Caco-2 (cell line): ENCODE measurements at regions of chr13 and their contacts with region 1.

Region 1: DNA sequence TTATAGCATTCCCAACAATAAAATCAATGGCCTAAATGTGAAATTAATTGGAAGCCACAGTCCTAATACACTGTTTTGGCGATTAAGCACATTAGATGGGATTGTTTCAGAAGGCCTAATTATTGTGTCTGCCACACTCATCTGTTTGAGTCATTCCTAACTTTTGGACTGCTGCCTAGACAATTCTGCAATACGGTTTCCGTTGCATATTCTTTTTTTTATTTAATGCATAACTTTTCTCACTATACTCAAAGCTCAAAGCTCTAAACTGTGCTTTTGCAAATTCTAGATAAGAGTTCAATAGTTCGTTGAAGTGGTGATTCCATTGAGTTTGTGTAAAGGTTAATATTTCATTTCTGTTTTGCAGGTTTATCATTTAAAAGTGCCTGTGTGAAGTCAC is 53.1 kb downstream of the MBNL2 start:
- DNase-seq: no peak
- H3K4me3 ChIP-seq: no peak overlapping the region
- H3K4me3 Mint-ChIP-seq: no peak overlapping the region
- H3K27ac Mint-ChIP-seq: peak overlapping the region; percentile 29
- H3K4me1 ChIP-seq: peaks cover 71% of the 10 kb centered on the region
- H3K4me1 Mint-ChIP-seq: peaks cover 25% of the 10 kb centered on the region
- H3K27me3 ChIP-seq: no peaks in the 10 kb centered on the region
- H3K27me3 Mint-ChIP-seq: no peaks in the 10 kb centered on the region
- CTCF ChIP-seq: no peak

Region 2: GRCh38 chr13:97221989-97222700 is 53.1 kb before region 1 on chr13 and contains the start of gene MBNL2:
- CTCF ChIA-PET with region 1: no interaction called
- POLR2A ChIA-PET with region 1: no interaction called
- intact Hi-C with region 1: loop called (anchors 2 kb)
- DNase-seq: peak; percentile 91 to 92
- H3K4me3 ChIP-seq: peak within 1 kb of the TSS; percentile 51
- H3K4me3 Mint-ChIP-seq: peak within 1 kb of the TSS; percentile 95
- H3K27ac Mint-ChIP-seq: peak within 1 kb of the TSS; percentile 89
- H3K4me1 ChIP-seq: peaks cover 43% of the 10 kb centered on the region
- H3K4me1 Mint-ChIP-seq: peaks cover 40% of the 10 kb centered on the region
- H3K27me3 ChIP-seq: no peaks in the 10 kb centered on the region
- H3K27me3 Mint-ChIP-seq: no peaks in the 10 kb centered on the region
- CTCF ChIP-seq: no peak
- total RNA-seq, gene MBNL2: 41.6 TPM in 2 replicates

Region 3: GRCh38 chr13:97243915-97244781 is 31.1 kb before region 1 on chr13:
- CTCF ChIA-PET with region 1: no interaction called
- POLR2A ChIA-PET with region 1: no interaction called
- intact Hi-C with region 1: loop called (anchors 1 kb)
- DNase-seq: peak; percentile 60 to 61
- H3K4me3 ChIP-seq: no peak overlapping the region
- H3K4me3 Mint-ChIP-seq: peak overlapping the region; percentile 9
- H3K27ac Mint-ChIP-seq: peak overlapping the region; percentile 48
- H3K4me1 ChIP-seq: peaks cover 44% of the 10 kb centered on the region
- H3K4me1 Mint-ChIP-seq: peaks cover 40% of the 10 kb centered on the region
- H3K27me3 ChIP-seq: no peaks in the 10 kb centered on the region
- H3K27me3 Mint-ChIP-seq: no peaks in the 10 kb centered on the region
- CTCF ChIP-seq: no peak